MCF 10A (cell line): ENCODE measurements at regions of chr15 and their contacts with region 1.

Region 1: GRCh38 chr15:99565299-99566156 is at the start of gene MEF2A:
- DNase-seq: peak; percentile 90
- H3K4me3 Mint-ChIP-seq: peak within 1 kb of the TSS; percentile 98
- H3K27ac Mint-ChIP-seq: peak within 1 kb of the TSS; percentile 89
- H3K4me1 Mint-ChIP-seq: peaks cover 10% of the 10 kb centered on the region
- H3K27me3 Mint-ChIP-seq: no peaks in the 10 kb centered on the region
- CTCF ChIP-seq: no peak
- total RNA-seq, gene MEF2A: 52.9 and 55.2 TPM in 2 replicates

Region 2: GRCh38 chr15:99250494-99251435 is 314.8 kb before region 1 on chr15:
- CTCF ChIA-PET with region 1: no interaction called
- POLR2A ChIA-PET with region 1: interaction called, 12 read pairs
- intact Hi-C with region 1: no loop called
- DNase-seq: peak; percentile 98
- H3K4me3 Mint-ChIP-seq: no peak overlapping the region
- H3K27ac Mint-ChIP-seq: no peak overlapping the region
- H3K4me1 Mint-ChIP-seq: peaks cover 23% of the 10 kb centered on the region
- H3K27me3 Mint-ChIP-seq: no peaks in the 10 kb centered on the region
- CTCF ChIP-seq: no peak

Region 3: GRCh38 chr15:99424978-99425656 is 140.4 kb before region 1 on chr15:
- CTCF ChIA-PET with region 1: no interaction called
- POLR2A ChIA-PET with region 1: no interaction called
- intact Hi-C with region 1: loop called (anchors 5 kb)
- DNase-seq: peak; percentile 90
- H3K4me3 Mint-ChIP-seq: no peak overlapping the region
- H3K27ac Mint-ChIP-seq: peak overlapping the region; percentile 93
- H3K4me1 Mint-ChIP-seq: peaks cover 6% of the 10 kb centered on the region
- H3K27me3 Mint-ChIP-seq: no peaks in the 10 kb centered on the region
- CTCF ChIP-seq: no peak

Region 4: GRCh38 chr15:99452774-99453636 is 112.5 kb before region 1 on chr15:
- CTCF ChIA-PET with region 1: no interaction called
- POLR2A ChIA-PET with region 1: interaction called, 11 read pairs
- intact Hi-C with region 1: no loop called
- DNase-seq: peak; percentile 78
- H3K4me3 Mint-ChIP-seq: peak overlapping the region; percentile 25
- H3K27ac Mint-ChIP-seq: peak overlapping the region; percentile 84
- H3K4me1 Mint-ChIP-seq: peaks cover 52% of the 10 kb centered on the region
- H3K27me3 Mint-ChIP-seq: no peaks in the 10 kb centered on the region
- CTCF ChIP-seq: no peak

Region 5: GRCh38 chr15:99605490-99605931 is 40.0 kb after region 1 on chr15:
- CTCF ChIA-PET with region 1: interaction called, 3 read pairs
- POLR2A ChIA-PET with region 1: interaction called, 56 read pairs
- intact Hi-C with region 1: loop called (anchors 5 kb)
- DNase-seq: peak; percentile 84
- H3K4me3 Mint-ChIP-seq: peak overlapping the region; percentile 77
- H3K27ac Mint-ChIP-seq: peak overlapping the region; percentile 95
- H3K4me1 Mint-ChIP-seq: peaks cover 34% of the 10 kb centered on the region
- H3K27me3 Mint-ChIP-seq: no peaks in the 10 kb centered on the region
- CTCF ChIP-seq: no peak

Region 6: GRCh38 chr15:99733268-99734039 is 167.9 kb after region 1 on chr15 and contains the start of gene LYSMD4:
- CTCF ChIA-PET with region 1: interaction called, 3 read pairs
- POLR2A ChIA-PET with region 1: interaction called, 12 read pairs
- intact Hi-C with region 1: no loop called
- DNase-seq: peak; percentile 95
- H3K4me3 Mint-ChIP-seq: peak within 1 kb of the TSS; percentile 77
- H3K27ac Mint-ChIP-seq: peak within 1 kb of the TSS; percentile 94
- H3K4me1 Mint-ChIP-seq: peaks cover 14% of the 10 kb centered on the region
- H3K27me3 Mint-ChIP-seq: no peaks in the 10 kb centered on the region
- CTCF ChIP-seq: no peak
- total RNA-seq, gene LYSMD4: 5.7 and 9.0 TPM in 2 replicates